Activated CD8-positive, alpha-beta memory T cell treated with anti-CD3 and anti-CD28 coated beads, Interleukin-2, amount 10 ng/mL, durations not matched to agents 7 days and 5 days (primary cell): ENCODE measurements at regions of chr14 and their contacts with region 1.

Region 1: DNA sequence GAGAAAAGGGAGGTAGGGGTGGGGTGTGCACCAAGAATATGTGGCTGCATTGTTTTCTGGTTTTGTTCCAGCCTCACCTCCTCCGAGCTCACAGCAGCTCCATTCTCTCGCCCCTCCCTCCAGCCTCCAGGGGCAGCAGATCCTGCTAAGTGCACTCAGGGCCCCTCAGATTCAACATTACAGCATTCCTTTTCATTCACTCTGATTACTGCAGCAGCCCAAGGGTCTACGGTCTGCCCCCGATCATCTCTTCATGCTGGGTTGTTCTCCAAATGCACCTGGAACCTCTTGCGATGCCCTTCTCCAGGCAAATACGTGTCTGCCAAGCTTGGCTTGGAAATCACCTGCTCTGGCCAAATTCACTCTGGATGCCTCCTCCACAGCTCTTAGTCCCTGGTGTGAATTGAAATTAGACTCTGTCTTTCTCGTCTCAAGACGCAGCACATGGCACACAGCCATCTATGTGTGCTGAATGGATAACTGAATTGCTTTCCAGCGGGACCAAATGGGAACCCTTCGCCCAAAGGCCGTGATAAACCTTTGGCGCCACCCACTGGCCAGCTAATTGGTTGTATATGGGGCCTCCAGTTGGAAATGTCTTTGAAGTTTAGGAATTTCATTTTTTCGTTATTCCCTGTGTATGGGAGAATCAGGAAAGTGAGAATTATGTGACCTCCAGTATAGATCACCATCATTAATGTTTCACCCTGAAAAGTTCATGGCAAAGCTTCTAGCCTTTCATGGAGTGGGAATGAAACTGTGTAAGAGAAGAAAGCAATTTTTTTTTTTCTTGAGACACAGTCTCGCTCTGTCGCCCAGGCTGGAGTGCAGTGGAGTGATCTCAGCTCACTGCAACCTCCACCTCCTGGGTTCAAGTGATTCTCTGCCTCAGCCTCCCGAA is 9.6 kb upstream of the HSP90AA1 start:
- DNase-seq: peak; percentile 77
- ATAC-seq: peak; percentile 70
- H3K4me3 Mint-ChIP-seq: no peak overlapping the region
- H3K27ac Mint-ChIP-seq: no peak overlapping the region
- H3K4me1 Mint-ChIP-seq: peaks cover 17% of the 10 kb centered on the region
- H3K27me3 Mint-ChIP-seq: no peaks in the 10 kb centered on the region

Region 2: GRCh38 chr14:101767618-101768362 is 328.7 kb before region 1 on chr14:
- CTCF ChIA-PET with region 1: interaction called, 11 read pairs
- DNase-seq: no peak
- ATAC-seq: no peak
- H3K4me3 Mint-ChIP-seq: no peak overlapping the region
- H3K27ac Mint-ChIP-seq: no peak overlapping the region
- H3K4me1 Mint-ChIP-seq: peaks cover 16% of the 10 kb centered on the region
- H3K27me3 Mint-ChIP-seq: no peaks in the 10 kb centered on the region

Region 3: GRCh38 chr14:101964297-101965144 is 131.9 kb before region 1 on chr14 and contains the start of gene DYNC1H1:
- CTCF ChIA-PET with region 1: interaction called, 51 read pairs
- DNase-seq: peak; percentile 92
- ATAC-seq: peak; percentile 86
- H3K4me3 Mint-ChIP-seq: peak within 1 kb of the TSS; percentile 88
- H3K27ac Mint-ChIP-seq: peak within 1 kb of the TSS; percentile 92
- H3K4me1 Mint-ChIP-seq: peaks cover 47% of the 10 kb centered on the region
- H3K27me3 Mint-ChIP-seq: peaks cover 2% of the 10 kb centered on the region
- total RNA-seq, gene DYNC1H1: 308 to 325 TPM

Region 4: GRCh38 chr14:102046343-102047278 is 49.9 kb before region 1 on chr14:
- CTCF ChIA-PET with region 1: interaction called, 11 read pairs
- DNase-seq: no peak
- ATAC-seq: peak; percentile 35
- H3K4me3 Mint-ChIP-seq: no peak overlapping the region
- H3K27ac Mint-ChIP-seq: no peak overlapping the region
- H3K4me1 Mint-ChIP-seq: no peaks in the 10 kb centered on the region
- H3K27me3 Mint-ChIP-seq: no peaks in the 10 kb centered on the region

Region 5: GRCh38 chr14:102057480-102058114 is 38.9 kb before region 1 on chr14:
- CTCF ChIA-PET with region 1: interaction called, 14 read pairs
- DNase-seq: no peak
- ATAC-seq: peak; percentile 55
- H3K4me3 Mint-ChIP-seq: no peak overlapping the region
- H3K27ac Mint-ChIP-seq: no peak overlapping the region
- H3K4me1 Mint-ChIP-seq: peaks cover 25% of the 10 kb centered on the region
- H3K27me3 Mint-ChIP-seq: peaks cover 3% of the 10 kb centered on the region

Region 6: GRCh38 chr14:102063091-102063802 is 33.2 kb before region 1 on chr14:
- CTCF ChIA-PET with region 1: interaction called, 14 read pairs
- DNase-seq: peak; percentile 81
- ATAC-seq: peak; percentile 89
- H3K4me3 Mint-ChIP-seq: no peak overlapping the region
- H3K27ac Mint-ChIP-seq: no peak overlapping the region
- H3K4me1 Mint-ChIP-seq: peaks cover 11% of the 10 kb centered on the region
- H3K27me3 Mint-ChIP-seq: peaks cover 7% of the 10 kb centered on the region

Region 7: GRCh38 chr14:102111101-102111500 is 14.6 kb after region 1 on chr14:
- CTCF ChIA-PET with region 1: interaction called, 20 read pairs
- DNase-seq: no peak
- ATAC-seq: no peak
- H3K4me3 Mint-ChIP-seq: no peak overlapping the region
- H3K27ac Mint-ChIP-seq: no peak overlapping the region
- H3K4me1 Mint-ChIP-seq: no peaks in the 10 kb centered on the region
- H3K27me3 Mint-ChIP-seq: no peaks in the 10 kb centered on the region

Region 8: DNA sequence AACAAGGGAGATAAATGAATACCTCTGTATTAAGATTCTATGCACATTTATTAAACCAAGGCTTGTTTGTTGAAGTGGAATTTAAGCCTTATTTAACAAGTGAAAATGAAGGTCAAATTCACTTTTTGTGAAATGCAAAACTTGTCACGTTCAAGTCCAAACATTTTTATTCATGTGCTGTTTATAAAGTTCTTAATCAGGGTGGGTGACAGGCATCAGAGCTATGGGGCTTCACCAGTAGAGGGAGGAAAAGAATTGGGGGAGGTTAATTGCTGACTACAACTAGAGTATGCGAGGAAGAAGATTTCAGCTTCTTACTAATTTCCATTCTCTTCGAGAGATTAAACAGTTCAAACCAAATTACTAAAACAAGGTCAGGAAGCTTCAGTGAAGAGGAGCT is 198.8 kb after region 1 on chr14:
- CTCF ChIA-PET with region 1: no interaction called
- DNase-seq: no peak
- ATAC-seq: no peak
- H3K4me3 Mint-ChIP-seq: no peak overlapping the region
- H3K27ac Mint-ChIP-seq: no peak overlapping the region
- H3K4me1 Mint-ChIP-seq: no peaks in the 10 kb centered on the region
- H3K27me3 Mint-ChIP-seq: no peaks in the 10 kb centered on the region